SK-N-SH (cell line): ENCODE measurements at regions of chr11 and their contacts with region 1.

Region 1: GRCh38 chr11:82718307-82718706 is 15.4 kb downstream of the FAM181B start:
- DNase-seq: peak; percentile 54
- H3K4me3 ChIP-seq: no peak overlapping the region
- H3K27ac ChIP-seq: no peak overlapping the region
- H3K4me1 ChIP-seq: peaks cover 0 to 7% of the 10 kb centered on the region in 2 experiments; a peak in 1 of 4 replicates
- H3K27me3 ChIP-seq: no peaks in the 10 kb centered on the region
- CTCF ChIP-seq: peak; percentile 83
- EP300 ChIP-seq: no peak
- RAD21 ChIP-seq: peak; percentile 89

Region 2: GRCh38 chr11:82507288-82507687 is 211.0 kb before region 1 on chr11:
- CTCF ChIA-PET with region 1: no interaction called
- POLR2A ChIA-PET with region 1: no interaction called
- DNase-seq: no peak
- H3K4me3 ChIP-seq: no peak overlapping the region
- H3K27ac ChIP-seq: no peak overlapping the region
- H3K4me1 ChIP-seq: no peaks in the 10 kb centered on the region
- H3K27me3 ChIP-seq: no peaks in the 10 kb centered on the region
- CTCF ChIP-seq: no peak
- EP300 ChIP-seq: no peak
- RAD21 ChIP-seq: no peak

Region 3: GRCh38 chr11:82701847-82702520 is 16.3 kb before region 1 on chr11:
- CTCF ChIA-PET with region 1: interaction called, 14 read pairs
- POLR2A ChIA-PET with region 1: no interaction called
- DNase-seq: peak; percentile 49
- H3K4me3 ChIP-seq: peak overlapping the region in 1 of 2 experiments; percentile 30; a peak in 1 of 4 replicates
- H3K27ac ChIP-seq: no peak overlapping the region
- H3K4me1 ChIP-seq: no peaks in the 10 kb centered on the region
- H3K27me3 ChIP-seq: no peaks in the 10 kb centered on the region; the same call in 1 of the 2 replicates
- CTCF ChIP-seq: peak; percentile 72
- EP300 ChIP-seq: no peak
- RAD21 ChIP-seq: peak; percentile 76

Region 4: DNA sequence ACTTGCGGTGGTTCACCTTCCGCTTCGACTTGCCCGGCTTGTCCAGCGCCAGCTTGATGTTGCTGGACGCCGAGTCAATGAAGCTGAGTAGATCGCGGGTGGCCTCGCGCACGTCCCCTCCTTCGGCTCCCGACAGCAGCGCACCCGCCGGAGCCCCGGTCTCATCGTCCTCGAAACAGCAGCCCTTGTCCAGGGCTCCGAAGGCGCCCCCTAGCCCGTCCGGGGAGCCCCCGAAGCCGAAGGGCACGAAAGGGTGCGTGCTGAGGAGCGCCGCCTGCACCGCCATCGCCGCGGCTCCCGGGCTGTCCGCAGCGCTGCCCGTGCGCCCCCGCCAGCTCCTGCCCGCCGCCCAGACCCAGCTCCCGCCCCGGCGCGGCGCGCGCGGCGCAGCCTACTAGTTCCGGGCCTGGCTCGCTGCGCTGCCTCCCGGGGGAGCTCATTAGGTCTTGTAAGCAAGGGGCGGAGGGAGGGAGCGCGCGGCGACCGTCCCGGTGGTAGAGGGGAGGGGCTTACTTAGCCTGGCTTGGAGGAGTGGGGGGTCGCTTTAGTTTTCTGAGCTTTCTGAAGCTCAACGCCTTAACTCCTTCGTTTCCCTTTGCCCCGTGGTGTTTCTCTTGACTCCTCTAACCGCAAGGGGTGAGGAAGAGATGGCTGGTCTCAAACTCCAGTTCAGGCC is 15.3 kb after region 1 on chr11 and contains the start of gene FAM181B:
- CTCF ChIA-PET with region 1: interaction called, 43 read pairs
- POLR2A ChIA-PET with region 1: interaction called, 5 read pairs
- DNase-seq: peak; percentile 89
- H3K4me3 ChIP-seq: peak within 1 kb of the TSS; percentile 46 to 54; a peak in 2 of 4 replicates
- H3K27ac ChIP-seq: peak within 1 kb of the TSS in 1 of 2 experiments; percentile 71; a peak in 2 of 4 replicates
- H3K4me1 ChIP-seq: peaks cover 0 to 4% of the 10 kb centered on the region in 2 experiments; a peak in 1 of 4 replicates
- H3K27me3 ChIP-seq: peaks cover 35% of the 10 kb centered on the region
- CTCF ChIP-seq: no peak
- EP300 ChIP-seq: no peak
- RAD21 ChIP-seq: 0 out of 2 replicates have a peak, but pooled peaks have one; percentile 0
- polyA plus RNA-seq, gene FAM181B: 0.02 and 0.06 TPM in 2 replicates

Region 5: GRCh38 chr11:82790723-82791484 is 72.6 kb after region 1 on chr11:
- CTCF ChIA-PET with region 1: interaction called, 14 read pairs
- POLR2A ChIA-PET with region 1: no interaction called
- DNase-seq: peak; percentile 65
- H3K4me3 ChIP-seq: no peak overlapping the region
- H3K27ac ChIP-seq: peak overlapping the region; percentile 15 to 99; a peak in 3 of 4 replicates
- H3K4me1 ChIP-seq: peaks cover 0 to 28% of the 10 kb centered on the region in 2 experiments; a peak in 2 of 4 replicates
- H3K27me3 ChIP-seq: no peaks in the 10 kb centered on the region
- CTCF ChIP-seq: no peak
- EP300 ChIP-seq: peak in 1 of 2 experiments; percentile 58; a peak in 2 of 4 replicates
- RAD21 ChIP-seq: no peak

Region 6: GRCh38 chr11:82858556-82859091 is 140.3 kb after region 1 on chr11:
- CTCF ChIA-PET with region 1: interaction called, 12 read pairs
- POLR2A ChIA-PET with region 1: no interaction called
- DNase-seq: no peak
- H3K4me3 ChIP-seq: peak overlapping the region in 1 of 2 experiments; percentile 17; a peak in 1 of 4 replicates
- H3K27ac ChIP-seq: peak overlapping the region; percentile 67 to 81; a peak in 3 of 4 replicates
- H3K4me1 ChIP-seq: peaks cover 10 to 19% of the 10 kb centered on the region in 2 experiments; a peak in 3 of 4 replicates
- H3K27me3 ChIP-seq: no peaks in the 10 kb centered on the region
- CTCF ChIP-seq: no peak
- EP300 ChIP-seq: peak in 1 of 2 experiments; percentile 56; a peak in 1 of 4 replicates
- RAD21 ChIP-seq: no peak

Region 7: GRCh38 chr11:82900277-82901164 is 182.2 kb after region 1 on chr11 and contains the start of gene PRCP:
- CTCF ChIA-PET with region 1: interaction called, 23 read pairs
- POLR2A ChIA-PET with region 1: no interaction called
- DNase-seq: peak; percentile 89
- H3K4me3 ChIP-seq: peak within 1 kb of the TSS; percentile 78 to 90
- H3K27ac ChIP-seq: peak within 1 kb of the TSS; percentile 70 to 95
- H3K4me1 ChIP-seq: peaks cover 0 to 24% of the 10 kb centered on the region in 2 experiments; a peak in 3 of 4 replicates
- H3K27me3 ChIP-seq: no peaks in the 10 kb centered on the region
- CTCF ChIP-seq: 0 out of 2 replicates have a peak, but pooled peaks have one; percentile 11
- EP300 ChIP-seq: no peak
- RAD21 ChIP-seq: 0 out of 2 replicates have a peak, but pooled peaks have one; percentile 2
- polyA plus RNA-seq, gene PRCP: 65.0 and 91.7 TPM in 2 replicates